ENCODE measurements at regions of chr4 and their contacts with region 1.

Region 1: DNA sequence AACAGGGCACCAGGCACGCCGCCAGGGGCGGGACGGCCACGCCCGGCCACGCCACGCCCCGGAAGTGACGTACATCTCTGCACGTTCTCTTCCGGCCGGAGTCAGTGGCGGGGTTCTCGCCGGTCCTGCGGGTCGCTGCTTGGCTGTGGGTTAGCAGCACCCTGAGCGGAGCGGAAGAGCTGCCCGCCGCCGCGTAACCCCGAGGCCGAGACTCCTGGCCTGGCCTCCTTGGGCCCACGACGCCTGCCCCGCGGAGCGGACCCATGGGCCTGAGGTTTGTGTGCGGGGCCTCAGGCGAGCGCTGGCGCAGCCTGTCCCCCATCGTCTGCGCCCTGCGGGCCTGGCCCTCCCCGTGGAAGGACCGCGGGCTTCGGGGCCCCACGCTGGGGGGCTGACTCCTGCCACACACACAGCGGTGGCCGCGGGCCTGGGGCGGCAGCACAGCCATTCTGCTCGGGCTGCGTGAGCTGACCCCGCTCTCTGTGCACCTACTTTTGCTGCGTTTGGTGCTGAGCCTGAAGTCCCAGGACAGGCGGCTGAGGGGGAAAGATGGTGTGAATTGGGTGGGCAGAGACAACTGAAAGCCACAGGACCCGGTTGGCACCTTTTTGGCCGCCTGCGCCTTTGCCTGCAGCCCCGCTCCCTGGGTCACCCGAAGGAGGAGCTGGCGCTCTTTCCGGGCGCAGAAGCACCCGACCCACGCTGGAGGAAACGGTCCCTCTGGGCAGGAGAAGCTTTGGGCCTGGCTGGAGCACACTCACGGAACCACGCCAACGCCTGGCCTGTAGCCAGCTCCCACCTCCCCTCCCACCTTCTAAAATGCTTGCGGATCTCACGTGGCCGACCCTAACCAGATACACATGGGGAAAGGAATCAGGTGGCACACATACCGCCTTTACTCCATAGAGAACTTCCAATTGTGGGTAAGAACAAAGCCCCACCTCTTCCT is 28.1 kb downstream of the NOP14 start:
- DNase-seq: peak; percentile 90 to 99 (median 96)
- ATAC-seq: peak; percentile 67 to 75
- H3K4me3 Mint-ChIP-seq: peak overlapping the region; percentile 81 to 91 (median 85)
- H3K27ac Mint-ChIP-seq: peak overlapping the region; percentile 76 to 95 (median 92)
- H3K4me1 Mint-ChIP-seq: peaks cover 20 to 45% (median 38%) of the 10 kb centered on the region in 4 donors
- H3K27me3 Mint-ChIP-seq: no peaks in the 10 kb centered on the region

Region 2: GRCh38 chr4:2871911-2872310 is 63.2 kb before region 1 on chr4:
- POLR2A ChIA-PET with region 1: no interaction called
- DNase-seq: peak in 1 of 10 donors; percentile 3
- ATAC-seq: peak in 1 of 2 donors; percentile 56
- H3K4me3 Mint-ChIP-seq: peak overlapping the region in 3 of 10 donors; percentile 2 to 27 (median 5)
- H3K27ac Mint-ChIP-seq: peak overlapping the region in 9 of 10 donors; percentile 2 to 85 (median 72)
- H3K4me1 Mint-ChIP-seq: peaks cover 26 to 83% (median 68%) of the 10 kb centered on the region in 4 donors
- H3K27me3 Mint-ChIP-seq: no peaks in the 10 kb centered on the region

Region 3: GRCh38 chr4:2924765-2925301 is 10.3 kb before region 1 on chr4:
- POLR2A ChIA-PET with region 1: interaction called, 11 read pairs
- DNase-seq: no peak
- ATAC-seq: no peak
- H3K4me3 Mint-ChIP-seq: no peak overlapping the region
- H3K27ac Mint-ChIP-seq: peak overlapping the region in 8 of 10 donors; percentile 37 to 90 (median 71)
- H3K4me1 Mint-ChIP-seq: peaks cover 24 to 43% (median 40%) of the 10 kb centered on the region in 4 donors
- H3K27me3 Mint-ChIP-seq: no peaks in the 10 kb centered on the region

Region 4: DNA sequence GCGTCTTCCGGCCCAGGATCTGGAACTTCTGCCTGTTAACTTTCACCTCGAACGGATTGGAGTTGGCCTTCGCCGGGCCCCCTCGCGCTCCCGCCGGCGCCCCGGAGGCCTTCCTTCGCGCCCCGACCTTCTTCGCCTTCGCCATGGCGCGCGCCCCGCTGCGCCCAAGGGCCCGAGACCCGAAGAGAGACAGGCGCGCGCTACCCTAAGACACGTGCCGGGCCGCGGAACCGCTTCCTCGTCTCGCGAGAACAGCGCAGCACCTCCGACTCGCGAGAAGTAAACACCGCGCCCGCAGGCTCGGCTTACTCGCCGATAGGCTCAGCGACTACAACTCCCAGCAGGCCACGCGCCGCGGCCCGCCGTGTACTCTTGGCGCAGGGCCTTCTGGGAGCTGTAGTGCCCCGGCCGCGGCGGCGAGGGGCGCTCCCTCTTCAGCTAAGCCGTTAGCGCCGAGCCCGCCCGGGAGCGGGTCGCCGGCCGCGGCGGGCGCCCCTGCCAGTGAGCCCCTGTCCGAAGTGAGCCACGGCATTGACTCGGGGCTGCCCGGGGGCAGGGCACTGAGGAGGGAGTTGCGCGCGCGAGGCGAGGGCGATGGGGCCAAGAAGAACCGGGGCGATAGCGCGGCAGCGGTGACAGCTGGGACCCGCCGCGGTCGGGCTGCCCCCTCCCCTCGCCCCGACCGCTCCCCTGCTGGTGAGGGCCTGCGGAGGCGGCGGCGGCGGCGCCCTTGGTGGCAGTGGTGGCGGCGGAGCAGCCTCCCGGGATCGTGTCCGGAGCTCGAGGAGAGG is 28.3 kb after region 1 on chr4 and contains the starts of genes GRK4 and NOP14:
- POLR2A ChIA-PET with region 1: interaction called, 28 read pairs
- DNase-seq: peak; percentile 94 to 99 (median 97)
- ATAC-seq: peak; percentile 80 to 90
- H3K4me3 Mint-ChIP-seq: peak within 1 kb of the TSS; percentile 79 to 92 (median 88)
- H3K27ac Mint-ChIP-seq: peak within 1 kb of the TSS; percentile 82 to 96 (median 90)
- H3K4me1 Mint-ChIP-seq: peaks cover 19 to 48% (median 37%) of the 10 kb centered on the region in 4 donors
- H3K27me3 Mint-ChIP-seq: no peaks in the 10 kb centered on the region
- polyA plus RNA-seq, gene GRK4: 0.87 to 1.5 (median 0.90) TPM
- polyA plus RNA-seq, gene NOP14: 10.8 to 31.8 (median 21.8) TPM

Region 5: GRCh38 chr4:3047464-3048286 is 112.6 kb after region 1 on chr4:
- POLR2A ChIA-PET with region 1: no interaction called
- DNase-seq: peak; percentile 25 to 82 (median 56)
- ATAC-seq: peak; percentile 59 to 78
- H3K4me3 Mint-ChIP-seq: peak overlapping the region; percentile 65 to 89 (median 84)
- H3K27ac Mint-ChIP-seq: peak overlapping the region; percentile 30 to 94 (median 84)
- H3K4me1 Mint-ChIP-seq: peaks cover 12 to 47% (median 31%) of the 10 kb centered on the region in 4 donors
- H3K27me3 Mint-ChIP-seq: peaks cover 0 to 2% (median 0%) of the 10 kb centered on the region in 5 donors